ENCODE measurements at regions of chr12 and their contacts with region 1.

Region 1: DNA sequence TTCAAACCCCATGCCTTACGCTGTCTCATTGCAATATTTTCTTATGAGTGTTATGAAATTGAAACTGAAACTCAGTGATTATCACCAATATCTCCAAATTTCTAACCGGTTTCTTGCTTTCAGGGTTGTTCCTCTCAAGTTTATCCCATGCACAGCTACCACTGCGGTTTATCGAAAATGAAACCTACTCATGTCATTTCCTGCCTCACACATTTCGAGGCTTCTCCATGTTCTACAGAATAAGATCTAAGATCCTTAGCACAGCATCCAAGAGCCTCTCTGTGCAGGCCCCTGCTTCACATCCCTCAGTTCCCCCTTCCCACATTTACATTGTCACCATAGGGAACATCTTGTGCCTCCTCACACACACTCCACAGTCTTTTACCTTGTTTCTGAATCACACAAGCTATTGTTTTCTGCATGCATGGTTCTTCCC is 45.5 kb upstream of the FAR2 start:
- DNase-seq: peak; percentile 59
- ATAC-seq: peak; percentile 92
- H3K4me3 Mint-ChIP-seq: peak overlapping the region; percentile 11
- H3K27ac Mint-ChIP-seq: peak overlapping the region; percentile 28
- H3K4me1 Mint-ChIP-seq: peaks cover 34% of the 10 kb centered on the region
- H3K27me3 Mint-ChIP-seq: peaks cover 7% of the 10 kb centered on the region

Region 2: GRCh38 chr12:28164644-28165275 is 938.8 kb before region 1 on chr12:
- CTCF ChIA-PET with region 1: no interaction called
- POLR2A ChIA-PET with region 1: no interaction called
- intact Hi-C with region 1: no loop called
- DNase-seq: no peak
- ATAC-seq: no peak
- H3K4me3 Mint-ChIP-seq: no peak overlapping the region
- H3K27ac Mint-ChIP-seq: no peak overlapping the region
- H3K4me1 Mint-ChIP-seq: no peaks in the 10 kb centered on the region
- H3K27me3 Mint-ChIP-seq: no peaks in the 10 kb centered on the region

Region 3: GRCh38 chr12:28497889-28498411 is 605.6 kb before region 1 on chr12:
- CTCF ChIA-PET with region 1: no interaction called
- POLR2A ChIA-PET with region 1: no interaction called
- intact Hi-C with region 1: loop called in 1 of 2 experiments (anchors 5 kb)
- DNase-seq: peak; percentile 4
- ATAC-seq: peak; percentile 96
- H3K4me3 Mint-ChIP-seq: no peak overlapping the region
- H3K27ac Mint-ChIP-seq: no peak overlapping the region
- H3K4me1 Mint-ChIP-seq: peaks cover 16% of the 10 kb centered on the region
- H3K27me3 Mint-ChIP-seq: no peaks in the 10 kb centered on the region

Region 4: GRCh38 chr12:29050503-29050902 is 53.1 kb before region 1 on chr12:
- CTCF ChIA-PET with region 1: no interaction called
- POLR2A ChIA-PET with region 1: no interaction called
- intact Hi-C with region 1: no loop called
- DNase-seq: no peak
- ATAC-seq: no peak
- H3K4me3 Mint-ChIP-seq: no peak overlapping the region
- H3K27ac Mint-ChIP-seq: no peak overlapping the region
- H3K4me1 Mint-ChIP-seq: no peaks in the 10 kb centered on the region
- H3K27me3 Mint-ChIP-seq: peaks cover 4% of the 10 kb centered on the region

Region 5: DNA sequence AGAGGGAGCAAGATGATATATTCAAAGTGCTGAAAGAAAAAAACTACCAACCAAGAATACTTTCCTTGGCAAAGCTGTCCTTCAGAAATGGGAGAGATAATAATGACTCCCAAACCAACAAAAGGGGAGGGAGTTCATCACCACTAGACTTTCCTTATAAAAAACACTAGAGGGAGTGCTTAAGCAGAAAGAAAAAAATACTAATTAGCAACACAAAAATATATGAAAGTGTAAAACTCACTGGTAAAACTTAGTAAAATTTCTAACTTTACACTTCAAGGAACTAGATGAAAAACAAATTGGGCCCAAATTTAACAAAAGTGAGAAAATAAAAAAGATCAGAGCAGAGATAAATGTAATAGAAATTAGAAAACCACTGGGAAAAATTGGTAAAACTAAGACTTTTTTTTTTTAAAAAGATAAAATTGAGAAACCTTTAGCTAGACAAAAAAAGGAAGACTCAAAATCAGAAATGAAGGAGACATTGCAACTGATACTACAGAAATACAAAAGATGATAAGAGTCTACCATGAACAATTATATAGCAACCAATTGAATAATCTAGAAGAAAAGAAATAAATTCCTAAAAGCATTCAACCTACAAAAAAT is 14.8 kb before region 1 on chr12:
- CTCF ChIA-PET with region 1: interaction called, 23 read pairs
- POLR2A ChIA-PET with region 1: no interaction called
- intact Hi-C with region 1: no loop called
- DNase-seq: no peak
- ATAC-seq: no peak
- H3K4me3 Mint-ChIP-seq: no peak overlapping the region
- H3K27ac Mint-ChIP-seq: no peak overlapping the region
- H3K4me1 Mint-ChIP-seq: no peaks in the 10 kb centered on the region
- H3K27me3 Mint-ChIP-seq: peaks cover 13% of the 10 kb centered on the region

Region 6: GRCh38 chr12:29241821-29242591 is 138.4 kb after region 1 on chr12:
- CTCF ChIA-PET with region 1: no interaction called
- POLR2A ChIA-PET with region 1: no interaction called
- intact Hi-C with region 1: loop called (anchors 1 to 2 kb)
- DNase-seq: peak; percentile 42
- ATAC-seq: peak; percentile 93
- H3K4me3 Mint-ChIP-seq: no peak overlapping the region
- H3K27ac Mint-ChIP-seq: no peak overlapping the region
- H3K4me1 Mint-ChIP-seq: peaks cover 21% of the 10 kb centered on the region
- H3K27me3 Mint-ChIP-seq: no peaks in the 10 kb centered on the region

Region 7: GRCh38 chr12:29486972-29487371 is 383.4 kb after region 1 on chr12:
- CTCF ChIA-PET with region 1: no interaction called
- POLR2A ChIA-PET with region 1: no interaction called
- intact Hi-C with region 1: no loop called
- DNase-seq: no peak
- ATAC-seq: no peak
- H3K4me3 Mint-ChIP-seq: no peak overlapping the region
- H3K27ac Mint-ChIP-seq: no peak overlapping the region
- H3K4me1 Mint-ChIP-seq: no peaks in the 10 kb centered on the region
- H3K27me3 Mint-ChIP-seq: peaks cover 24% of the 10 kb centered on the region